T-cell (primary cell): ENCODE measurements at regions of chr21 and their contacts with region 1.

Region 1: GRCh38 chr21:33360881-33361602 is 36.3 kb downstream of the IFNAR1 start:
- DNase-seq: peak; percentile 65 to 92 (median 82)
- ATAC-seq: peak; percentile 65 to 72 (median 68)
- H3K4me3 ChIP-seq: peak overlapping the region; percentile 46 to 56
- H3K4me3 Mint-ChIP-seq: peak overlapping the region; percentile 82 to 84 (median 83)
- H3K27ac ChIP-seq: peak overlapping the region; percentile 69
- H3K27ac Mint-ChIP-seq: peak overlapping the region; percentile 67 to 81
- H3K4me1 ChIP-seq: peaks cover 0 to 15% of the 10 kb centered on the region in 2 experiments
- H3K4me1 Mint-ChIP-seq: peaks cover 20 to 21% (median 21%) of the 10 kb centered on the region in 3 donors
- H3K27me3 ChIP-seq: no peaks in the 10 kb centered on the region
- H3K27me3 Mint-ChIP-seq: no peaks in the 10 kb centered on the region

Region 2: GRCh38 chr21:33199516-33200217 is 161.4 kb before region 1 on chr21:
- CTCF ChIA-PET with region 1: interaction called, 6 to 29 read pairs
- POLR2A ChIA-PET with region 1: no interaction called
- DNase-seq: peak; percentile 47 to 93 (median 79)
- ATAC-seq: peak; percentile 85 to 94 (median 92)
- H3K4me3 ChIP-seq: no peak overlapping the region
- H3K4me3 Mint-ChIP-seq: no peak overlapping the region
- H3K27ac ChIP-seq: peak overlapping the region; percentile 8
- H3K27ac Mint-ChIP-seq: peak overlapping the region; percentile 48 to 57
- H3K4me1 ChIP-seq: peaks cover 6 to 15% of the 10 kb centered on the region in 2 experiments
- H3K4me1 Mint-ChIP-seq: peaks cover 41 to 60% (median 46%) of the 10 kb centered on the region in 3 donors
- H3K27me3 ChIP-seq: peaks cover 0 to 3% of the 10 kb centered on the region in 2 experiments
- H3K27me3 Mint-ChIP-seq: peaks cover 0 to 5% of the 10 kb centered on the region in 2 donors

Region 3: GRCh38 chr21:33348706-33349105 is 12.3 kb before region 1 on chr21:
- CTCF ChIA-PET with region 1: interaction called, 3 to 21 read pairs
- POLR2A ChIA-PET with region 1: interaction called, 8 to 24 read pairs
- DNase-seq: no peak
- ATAC-seq: no peak
- H3K4me3 ChIP-seq: no peak overlapping the region
- H3K4me3 Mint-ChIP-seq: no peak overlapping the region
- H3K27ac ChIP-seq: no peak overlapping the region
- H3K27ac Mint-ChIP-seq: peak overlapping the region in 1 of 2 donors; percentile 28
- H3K4me1 ChIP-seq: peaks cover 6 to 11% of the 10 kb centered on the region in 2 experiments
- H3K4me1 Mint-ChIP-seq: peaks cover 19 to 30% (median 24%) of the 10 kb centered on the region in 3 donors
- H3K27me3 ChIP-seq: no peaks in the 10 kb centered on the region
- H3K27me3 Mint-ChIP-seq: no peaks in the 10 kb centered on the region

Region 4: DNA sequence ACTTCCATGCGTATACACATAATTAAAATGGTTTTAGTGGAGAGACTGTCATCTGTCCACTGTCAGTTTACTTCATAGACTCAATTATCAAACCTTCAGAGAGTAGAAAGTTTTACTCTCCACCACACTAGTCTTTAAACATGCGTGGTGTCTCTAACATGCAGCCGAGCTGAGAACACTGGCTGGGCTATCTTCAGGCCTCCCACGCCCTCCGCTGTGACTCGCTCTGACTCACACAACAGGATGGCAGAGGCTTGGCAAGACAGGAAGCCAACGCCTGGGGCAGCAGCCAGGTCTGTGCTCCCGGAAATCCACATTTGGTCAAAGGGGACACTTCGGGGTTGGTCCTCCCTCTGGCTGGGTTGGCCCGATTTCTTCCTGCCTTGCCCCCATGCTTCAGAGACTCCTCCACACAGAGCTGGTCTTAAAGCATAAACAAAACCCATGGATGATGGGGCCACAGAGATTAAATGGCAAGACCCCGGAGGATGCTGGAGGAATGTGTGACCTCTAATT is 19.5 kb after region 1 on chr21:
- CTCF ChIA-PET with region 1: interaction called, 19 to 21 read pairs
- POLR2A ChIA-PET with region 1: interaction called, 3 to 13 read pairs
- DNase-seq: peak; percentile 55 to 82 (median 68)
- ATAC-seq: peak; percentile 54 to 87 (median 85)
- H3K4me3 ChIP-seq: no peak overlapping the region
- H3K4me3 Mint-ChIP-seq: peak overlapping the region; percentile 6 to 84 (median 24)
- H3K27ac ChIP-seq: peak overlapping the region; percentile 73
- H3K27ac Mint-ChIP-seq: peak overlapping the region; percentile 88 to 94
- H3K4me1 ChIP-seq: peaks cover 45 to 60% of the 10 kb centered on the region in 2 experiments
- H3K4me1 Mint-ChIP-seq: peaks cover 56 to 75% (median 61%) of the 10 kb centered on the region in 3 donors
- H3K27me3 ChIP-seq: peaks cover 0 to 40% of the 10 kb centered on the region in 2 experiments
- H3K27me3 Mint-ChIP-seq: peaks cover 0 to 10% of the 10 kb centered on the region in 2 donors

Region 5: GRCh38 chr21:33427051-33427450 is 66.0 kb after region 1 on chr21:
- CTCF ChIA-PET with region 1: interaction called in 1 of 2 experiments, 12 read pairs
- POLR2A ChIA-PET with region 1: interaction called in 1 of 2 experiments, 3 read pairs
- DNase-seq: no peak
- ATAC-seq: no peak
- H3K4me3 ChIP-seq: no peak overlapping the region
- H3K4me3 Mint-ChIP-seq: no peak overlapping the region
- H3K27ac ChIP-seq: no peak overlapping the region
- H3K27ac Mint-ChIP-seq: peak overlapping the region in 1 of 2 donors; percentile 10
- H3K4me1 ChIP-seq: no peaks in the 10 kb centered on the region
- H3K4me1 Mint-ChIP-seq: no peaks in the 10 kb centered on the region
- H3K27me3 ChIP-seq: peaks cover 0 to 4% of the 10 kb centered on the region in 2 experiments
- H3K27me3 Mint-ChIP-seq: no peaks in the 10 kb centered on the region

Region 6: GRCh38 chr21:33608559-33608958 is 247.5 kb after region 1 on chr21:
- CTCF ChIA-PET with region 1: interaction called in 1 of 2 experiments, 15 read pairs
- POLR2A ChIA-PET with region 1: no interaction called
- DNase-seq: no peak
- ATAC-seq: no peak
- H3K4me3 ChIP-seq: no peak overlapping the region
- H3K4me3 Mint-ChIP-seq: no peak overlapping the region
- H3K27ac ChIP-seq: no peak overlapping the region
- H3K27ac Mint-ChIP-seq: no peak overlapping the region
- H3K4me1 ChIP-seq: no peaks in the 10 kb centered on the region
- H3K4me1 Mint-ChIP-seq: peaks cover 3 to 5% (median 4%) of the 10 kb centered on the region in 3 donors
- H3K27me3 ChIP-seq: no peaks in the 10 kb centered on the region
- H3K27me3 Mint-ChIP-seq: no peaks in the 10 kb centered on the region